Activated T-helper 1 cell treated with anti-CD3 and anti-CD28 coated beads, Interleukin-12 subunit alpha, Interleukin-12 subunit beta, Interleukin-2, Interleukin-4 antibody, amounts not matched to agents 30 ng/mL and 10 ng/mL and 1 ng/mL, durations not matched to agents 14 hours and 24 hours and 36 hours (primary cell): ENCODE measurements at regions of chr15 and their contacts with region 1.

Region 1: GRCh38 chr15:72231066-72231846 is at the start of gene PKM:
- DNase-seq: peak; percentile 95
- H3K4me3 Mint-ChIP-seq: peak within 1 kb of the TSS; percentile 98
- H3K27ac Mint-ChIP-seq: peak within 1 kb of the TSS; percentile 100
- H3K4me1 Mint-ChIP-seq: peaks cover 40% of the 10 kb centered on the region
- H3K27me3 Mint-ChIP-seq: no peaks in the 10 kb centered on the region
- total RNA-seq, gene PKM: 2,409 and 2,442 TPM in 2 replicates

Region 2: GRCh38 chr15:71295639-71296273 is 935.5 kb before region 1 on chr15:
- intact Hi-C with region 1: no loop called
- DNase-seq: no peak
- H3K4me3 Mint-ChIP-seq: no peak overlapping the region
- H3K27ac Mint-ChIP-seq: no peak overlapping the region
- H3K4me1 Mint-ChIP-seq: peaks cover 12% of the 10 kb centered on the region
- H3K27me3 Mint-ChIP-seq: peaks cover 4% of the 10 kb centered on the region

Region 3: GRCh38 chr15:72117486-72118399 is 113.5 kb before region 1 on chr15 and contains the start of gene MYO9A:
- intact Hi-C with region 1: loop called (anchors 1 kb)
- DNase-seq: peak; percentile 95
- H3K4me3 Mint-ChIP-seq: peak within 1 kb of the TSS; percentile 93
- H3K27ac Mint-ChIP-seq: peak within 1 kb of the TSS; percentile 95
- H3K4me1 Mint-ChIP-seq: peaks cover 23% of the 10 kb centered on the region
- H3K27me3 Mint-ChIP-seq: peaks cover 16% of the 10 kb centered on the region
- total RNA-seq, gene MYO9A: 15.2 and 16.4 TPM in 2 replicates

Region 4: DNA sequence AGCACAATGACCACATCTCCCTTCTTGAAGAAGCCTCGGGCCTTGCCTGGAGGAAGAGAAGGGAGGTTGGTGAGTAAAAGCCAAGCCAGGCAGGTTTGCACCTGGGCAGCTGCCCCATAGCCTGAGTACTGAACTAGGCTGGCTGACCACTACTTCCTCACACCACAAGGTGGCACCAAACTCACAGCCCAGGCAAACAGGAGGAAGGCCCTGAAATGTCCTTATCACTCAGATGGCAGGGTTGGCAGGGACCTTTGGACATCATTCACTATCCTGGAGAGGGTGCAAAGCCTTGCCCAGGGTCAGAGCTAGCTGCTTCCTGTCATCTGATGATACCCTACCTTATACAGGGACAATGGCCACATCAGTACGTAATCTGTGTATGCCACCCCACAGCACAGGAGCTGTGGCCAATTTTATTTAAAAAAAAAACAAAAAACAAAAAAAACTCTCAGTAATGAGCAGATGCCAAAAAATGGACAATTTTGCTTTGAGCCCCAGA is 31.5 kb before region 1 on chr15:
- intact Hi-C with region 1: loop called (anchors 1 kb)
- DNase-seq: peak; percentile 60
- H3K4me3 Mint-ChIP-seq: peak overlapping the region; percentile 5
- H3K27ac Mint-ChIP-seq: no peak overlapping the region
- H3K4me1 Mint-ChIP-seq: peaks cover 39% of the 10 kb centered on the region
- H3K27me3 Mint-ChIP-seq: peaks cover 3% of the 10 kb centered on the region

Region 5: GRCh38 chr15:72249142-72249810 is 18.0 kb after region 1 on chr15:
- intact Hi-C with region 1: no loop called
- DNase-seq: no peak
- H3K4me3 Mint-ChIP-seq: no peak overlapping the region
- H3K27ac Mint-ChIP-seq: no peak overlapping the region
- H3K4me1 Mint-ChIP-seq: peaks cover 8% of the 10 kb centered on the region
- H3K27me3 Mint-ChIP-seq: no peaks in the 10 kb centered on the region

Region 6: GRCh38 chr15:72265031-72265430 is 33.8 kb after region 1 on chr15:
- intact Hi-C with region 1: loop called (anchors 1 kb)
- DNase-seq: no peak
- H3K4me3 Mint-ChIP-seq: no peak overlapping the region
- H3K27ac Mint-ChIP-seq: no peak overlapping the region
- H3K4me1 Mint-ChIP-seq: peaks cover 34% of the 10 kb centered on the region
- H3K27me3 Mint-ChIP-seq: no peaks in the 10 kb centered on the region

Region 7: DNA sequence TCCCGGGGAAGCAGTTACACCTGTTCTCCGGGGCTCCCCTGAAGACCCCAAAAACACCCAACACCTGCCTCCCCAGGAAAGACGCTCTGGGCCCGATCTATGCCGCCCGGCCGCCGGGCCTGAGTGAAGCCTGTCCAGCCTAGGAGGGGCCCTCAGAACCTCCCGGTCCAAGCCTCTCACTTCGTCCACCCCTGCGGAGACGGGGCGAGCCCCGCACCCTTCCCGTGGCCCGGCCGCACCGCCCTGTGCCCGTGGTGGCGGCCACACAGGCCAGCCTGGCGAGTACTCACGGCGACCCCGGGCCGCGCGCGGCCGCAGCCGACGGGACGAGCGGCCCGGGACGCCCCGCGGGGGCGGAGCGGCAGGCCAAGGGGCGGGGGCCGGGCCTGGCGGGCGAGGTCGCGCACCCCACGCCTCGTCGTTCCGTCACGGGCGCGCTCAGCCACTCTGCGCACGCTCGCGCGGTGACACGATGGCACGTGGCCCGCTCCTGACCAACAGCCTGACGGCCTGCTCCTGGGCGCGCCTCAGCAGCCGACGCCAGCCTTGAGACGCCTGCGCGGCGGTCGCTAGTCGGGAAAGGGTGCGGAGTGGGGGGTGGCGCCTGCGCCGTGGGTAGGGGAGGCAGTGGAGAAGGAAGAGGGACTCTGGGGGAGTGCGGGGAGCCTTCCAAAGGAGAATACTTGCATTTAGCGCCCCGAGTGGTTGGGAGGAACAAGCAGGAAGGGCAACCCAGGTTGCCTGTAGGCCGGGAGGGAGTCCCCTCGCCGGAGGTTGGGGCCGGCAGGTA is 41.2 kb after region 1 on chr15 and contains the start of gene PARP6:
- intact Hi-C with region 1: loop called (anchors 1 kb)
- DNase-seq: peak; percentile 99
- H3K4me3 Mint-ChIP-seq: peak within 1 kb of the TSS; percentile 95
- H3K27ac Mint-ChIP-seq: peak within 1 kb of the TSS; percentile 90
- H3K4me1 Mint-ChIP-seq: peaks cover 43% of the 10 kb centered on the region
- H3K27me3 Mint-ChIP-seq: peaks cover 3% of the 10 kb centered on the region
- total RNA-seq, gene PARP6: 79.3 and 87.1 TPM in 2 replicates

Region 8: GRCh38 chr15:72319985-72320671 is 88.9 kb after region 1 on chr15 and contains the start of gene CELF6:
- intact Hi-C with region 1: loop called (anchors 1 kb)
- DNase-seq: peak; percentile 73
- H3K4me3 Mint-ChIP-seq: peak within 1 kb of the TSS; percentile 84
- H3K27ac Mint-ChIP-seq: peak within 1 kb of the TSS; percentile 60
- H3K4me1 Mint-ChIP-seq: peaks cover 19% of the 10 kb centered on the region
- H3K27me3 Mint-ChIP-seq: peaks cover 21% of the 10 kb centered on the region
- total RNA-seq, gene CELF6: 0.26 and 0.27 TPM in 2 replicates